ENCODE measurements at regions of chr6 and their contacts with region 1.

Region 1: DNA sequence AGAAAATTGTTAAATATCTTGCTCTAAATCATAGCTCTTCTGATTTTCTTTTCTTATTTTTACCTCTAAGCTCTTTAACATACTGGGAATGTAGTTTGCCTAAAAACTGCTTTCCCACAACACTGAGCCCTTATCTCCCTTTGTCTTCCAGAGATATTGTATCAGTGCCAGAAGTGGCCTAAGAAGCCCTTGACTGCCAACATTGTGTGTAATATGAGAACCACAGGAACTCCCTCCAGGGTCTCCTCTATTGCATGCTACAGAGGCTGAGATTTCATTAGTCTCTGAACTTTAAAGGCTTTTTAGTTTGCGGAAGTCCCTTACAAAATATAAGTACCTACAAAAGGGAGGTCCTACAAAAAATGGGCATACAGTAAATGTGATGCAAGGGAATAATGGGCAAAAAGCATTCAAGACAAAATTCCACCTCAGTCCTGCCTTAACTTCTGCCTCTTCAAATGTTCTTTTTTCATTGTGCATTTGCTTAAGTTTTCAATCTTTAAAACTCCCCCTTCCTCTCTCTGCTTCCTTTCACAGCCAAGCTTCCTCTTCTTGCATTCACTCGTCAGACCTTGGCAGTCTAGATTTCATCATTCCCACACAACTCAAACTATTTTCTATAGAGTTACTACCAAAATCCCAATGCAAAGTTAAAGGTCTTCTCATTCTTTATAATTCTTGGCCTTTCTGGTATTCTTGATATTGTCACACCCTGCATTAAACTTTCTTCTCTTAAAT is 76.5 kb downstream of the ADGRG6 start:
- DNase-seq: peak; percentile 34 to 63
- H3K4me3 ChIP-seq: no peak overlapping the region
- H3K27ac ChIP-seq: peak overlapping the region; percentile 8; the same call in 1 of the 2 replicates
- H3K4me1 ChIP-seq: peaks cover 49% of the 10 kb centered on the region
- H3K27me3 ChIP-seq: no peaks in the 10 kb centered on the region
- CTCF ChIP-seq: no peak

Region 2: GRCh38 chr6:142013286-142013685 is 365.0 kb before region 1 on chr6:
- CTCF ChIA-PET with region 1: no interaction called
- POLR2A ChIA-PET with region 1: no interaction called
- intact Hi-C with region 1: loop called (anchors 2 kb)
- DNase-seq: peak in 1 of 2 experiments; percentile 87
- H3K4me3 ChIP-seq: no peak overlapping the region
- H3K27ac ChIP-seq: peak overlapping the region; percentile 72
- H3K4me1 ChIP-seq: peaks cover 33% of the 10 kb centered on the region
- H3K27me3 ChIP-seq: no peaks in the 10 kb centered on the region
- CTCF ChIP-seq: no peak

Region 3: GRCh38 chr6:142279350-142280180 is 98.7 kb before region 1 on chr6:
- CTCF ChIA-PET with region 1: no interaction called
- POLR2A ChIA-PET with region 1: no interaction called
- intact Hi-C with region 1: no loop called
- DNase-seq: peak in 1 of 2 experiments; percentile 75
- H3K4me3 ChIP-seq: no peak overlapping the region
- H3K27ac ChIP-seq: 0 out of 2 replicates have a peak overlapping the region, but pooled peaks have one; percentile 3
- H3K4me1 ChIP-seq: peaks cover 26% of the 10 kb centered on the region
- H3K27me3 ChIP-seq: no peaks in the 10 kb centered on the region
- CTCF ChIP-seq: no peak

Region 4: DNA sequence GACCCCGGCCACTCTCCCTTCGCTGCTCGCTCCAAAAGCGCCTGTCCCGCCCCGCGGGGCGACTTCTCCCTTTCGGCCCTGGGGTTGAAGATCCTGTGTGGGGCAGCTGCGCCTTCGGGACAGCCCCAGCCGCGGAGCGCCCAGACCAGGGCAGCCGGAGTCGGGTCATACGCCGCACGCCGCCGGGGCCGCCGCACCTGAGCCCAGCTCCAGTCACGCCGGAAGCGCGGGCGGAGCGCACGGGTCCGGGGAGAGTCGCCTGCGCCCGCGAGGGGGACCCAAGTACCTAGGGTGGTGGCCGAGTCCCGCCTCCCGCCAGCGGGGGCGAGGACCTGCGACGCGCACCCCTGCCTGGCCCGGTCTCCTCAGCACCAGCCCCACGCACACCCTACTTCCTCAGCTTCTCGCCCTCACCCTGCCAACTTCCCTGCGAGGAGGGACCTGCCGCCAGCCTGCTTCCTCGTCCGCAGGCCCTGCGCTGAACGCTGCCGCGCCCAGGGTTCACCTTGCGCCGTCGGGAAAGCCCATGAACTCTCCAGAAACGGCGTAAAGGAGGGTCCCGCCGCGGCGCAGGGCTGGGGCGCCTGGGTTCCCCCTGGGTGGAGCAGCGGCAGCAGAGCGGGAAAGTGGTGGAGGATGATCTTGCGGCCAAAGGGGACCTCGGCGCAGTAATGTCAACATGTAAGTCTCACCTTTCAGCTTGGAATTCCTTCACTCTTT is 76.5 kb before region 1 on chr6 and contains the start of gene ADGRG6:
- CTCF ChIA-PET with region 1: no interaction called
- POLR2A ChIA-PET with region 1: interaction called, 8 read pairs
- intact Hi-C with region 1: loop called (anchors 1 kb)
- DNase-seq: peak; percentile 61
- H3K4me3 ChIP-seq: peak within 1 kb of the TSS; percentile 88
- H3K27ac ChIP-seq: peak within 1 kb of the TSS; percentile 78
- H3K4me1 ChIP-seq: peaks cover 41% of the 10 kb centered on the region
- H3K27me3 ChIP-seq: no peaks in the 10 kb centered on the region
- CTCF ChIP-seq: no peak
- total RNA-seq, gene ADGRG6: 24.0 and 30.3 TPM in 2 replicates

Region 5: GRCh38 chr6:142323377-142324040 is 54.8 kb before region 1 on chr6:
- CTCF ChIA-PET with region 1: interaction called, 4 read pairs
- POLR2A ChIA-PET with region 1: interaction called, 4 read pairs
- intact Hi-C with region 1: loop called (anchors 1 kb)
- DNase-seq: peak; percentile 25 to 98
- H3K4me3 ChIP-seq: peak overlapping the region; percentile 19; the same call in 1 of the 2 replicates
- H3K27ac ChIP-seq: peak overlapping the region; percentile 85
- H3K4me1 ChIP-seq: peaks cover 33% of the 10 kb centered on the region
- H3K27me3 ChIP-seq: no peaks in the 10 kb centered on the region
- CTCF ChIP-seq: no peak

Measured in PC-9 (cell line).